GM12878 (cell line): ENCODE measurements at regions of chr5 and their contacts with region 1.

Region 1: GRCh38 chr5:56233230-56233629 is at the start of gene ANKRD55:
- DNase-seq: no peak
- ATAC-seq: no peak
- H3K4me3 ChIP-seq: no peak within 1 kb of the TSS
- H3K27ac ChIP-seq: no peak within 1 kb of the TSS
- H3K4me1 ChIP-seq: no peaks in the 10 kb centered on the region
- H3K27me3 ChIP-seq: no peaks in the 10 kb centered on the region; a peak in 1 of 4 replicates
- CTCF ChIP-seq: no peak
- EP300 ChIP-seq: no peak
- POLR2A ChIP-seq: no peak
- RAD21 ChIP-seq: no peak
- polyA plus RNA-seq, gene ANKRD55: not detected

Region 2: GRCh38 chr5:56247592-56247991 is 14.4 kb after region 1 on chr5:
- CTCF ChIA-PET with region 1: no interaction called
- POLR2A ChIA-PET with region 1: no interaction called
- RAD21 ChIA-PET with region 1: no interaction called
- SMC1A ChIA-PET with region 1: interaction called, 3 read pairs
- in situ Hi-C with region 1: no loop called
- intact Hi-C with region 1: loop called (anchors 2 kb)
- DNase-seq: no peak
- ATAC-seq: no peak
- H3K4me3 ChIP-seq: no peak overlapping the region
- H3K27ac ChIP-seq: no peak overlapping the region
- H3K4me1 ChIP-seq: no peaks in the 10 kb centered on the region
- H3K27me3 ChIP-seq: no peaks in the 10 kb centered on the region; a peak in 1 of 4 replicates
- CTCF ChIP-seq: no peak
- EP300 ChIP-seq: no peak
- POLR2A ChIP-seq: no peak
- RAD21 ChIP-seq: no peak

Region 3: DNA sequence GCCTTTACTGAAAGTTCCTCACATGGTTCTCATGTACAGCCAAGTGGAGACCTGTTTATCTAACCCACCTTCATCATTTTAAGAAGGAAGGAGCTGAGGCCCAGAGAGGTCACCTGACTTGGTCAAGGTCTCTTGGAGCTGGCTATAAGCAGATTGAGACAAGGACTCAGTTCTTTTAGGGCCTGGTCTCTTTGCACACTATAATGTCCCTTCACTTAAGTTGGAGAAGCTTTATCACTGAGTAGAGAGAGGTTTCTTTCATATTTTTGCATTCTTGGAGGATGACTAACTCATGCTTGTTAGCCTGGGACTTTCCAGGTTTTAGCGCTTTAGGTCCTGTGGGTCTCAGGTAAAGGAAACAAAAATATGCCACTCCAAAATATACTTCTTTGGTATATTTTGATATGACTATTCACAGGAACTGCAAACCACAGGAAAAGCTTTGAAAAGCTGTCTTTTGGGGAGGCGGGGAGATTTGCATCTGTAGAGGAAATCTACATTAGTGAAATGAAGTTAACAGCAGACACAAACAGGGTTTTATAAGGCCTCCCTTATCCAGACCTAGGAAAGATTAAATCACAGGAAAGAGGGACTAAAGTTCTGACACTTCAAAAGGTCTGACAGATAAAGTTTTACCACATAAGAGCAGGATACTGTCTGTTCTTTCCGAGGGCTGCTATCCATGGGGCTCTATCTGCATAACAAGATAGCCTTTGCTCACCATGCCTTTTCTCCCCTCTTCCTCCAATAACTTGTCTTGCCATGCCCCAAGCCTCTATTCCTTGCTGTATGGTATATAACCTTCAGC is 95.7 kb after region 1 on chr5:
- CTCF ChIA-PET with region 1: no interaction called
- POLR2A ChIA-PET with region 1: no interaction called
- RAD21 ChIA-PET with region 1: no interaction called
- SMC1A ChIA-PET with region 1: no interaction called
- in situ Hi-C with region 1: no loop called
- intact Hi-C with region 1: no loop called
- DNase-seq: peak; percentile 78
- ATAC-seq: peak; percentile 82
- H3K4me3 ChIP-seq: peak overlapping the region; percentile 14; the same call in 1 of the 2 replicates
- H3K27ac ChIP-seq: peak overlapping the region; percentile 59
- H3K4me1 ChIP-seq: peaks cover 21% of the 10 kb centered on the region
- H3K27me3 ChIP-seq: no peaks in the 10 kb centered on the region
- CTCF ChIP-seq: no peak
- EP300 ChIP-seq: peak in 1 of 2 experiments; percentile 70; a peak in 1 of 4 replicates
- POLR2A ChIP-seq: no peak
- RAD21 ChIP-seq: no peak